Activated B cell treated with CpG ODN at 0.5 μM for 24 hours (primary cell): ENCODE measurements at regions of chr7 and their contacts with region 1.

Region 1: GRCh38 chr7:150988230-150989226 is 2.3 kb upstream of the NOS3 start:
- DNase-seq: no peak
- ATAC-seq: peak; percentile 49
- H3K4me3 Mint-ChIP-seq: no peak overlapping the region
- H3K27ac Mint-ChIP-seq: no peak overlapping the region
- H3K4me1 Mint-ChIP-seq: peaks cover 15% of the 10 kb centered on the region
- H3K27me3 Mint-ChIP-seq: peaks cover 48% of the 10 kb centered on the region
- CTCF ChIP-seq: no peak

Region 2: GRCh38 chr7:150778738-150779301 is 209.7 kb before region 1 on chr7:
- CTCF ChIA-PET with region 1: interaction called, 4 read pairs
- POLR2A ChIA-PET with region 1: no interaction called
- intact Hi-C with region 1: loop called (anchors 1 kb)
- DNase-seq: peak; percentile 37
- ATAC-seq: peak; percentile 49
- H3K4me3 Mint-ChIP-seq: no peak overlapping the region
- H3K27ac Mint-ChIP-seq: no peak overlapping the region
- H3K4me1 Mint-ChIP-seq: no peaks in the 10 kb centered on the region
- H3K27me3 Mint-ChIP-seq: peaks cover 18% of the 10 kb centered on the region
- CTCF ChIP-seq: peak; percentile 99

Region 3: DNA sequence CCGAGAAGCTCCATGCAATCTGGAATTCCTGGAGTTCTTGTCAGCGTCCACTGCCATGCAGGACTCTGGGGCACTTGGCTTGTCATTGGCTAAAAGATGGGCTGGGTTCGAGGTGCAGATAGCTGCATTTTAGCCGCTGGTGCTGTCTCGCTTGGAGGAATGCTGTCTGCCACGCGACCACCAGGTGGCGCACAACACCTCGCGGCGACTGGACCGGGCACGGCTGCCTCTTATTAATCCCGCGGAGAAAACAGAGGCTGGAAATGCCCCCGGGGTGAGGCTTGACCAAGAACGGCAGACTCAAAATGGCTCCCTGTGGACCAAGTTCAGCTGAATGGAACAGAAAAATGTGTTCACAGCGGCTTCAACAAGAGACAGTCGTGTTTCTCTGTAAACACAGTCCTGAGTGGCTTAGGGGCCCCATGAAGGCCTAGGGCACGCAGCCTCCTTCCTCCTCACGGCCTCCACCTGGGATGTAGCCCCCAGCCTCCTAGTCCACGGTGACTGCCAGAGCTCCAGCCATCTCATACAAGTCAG is 90.0 kb before region 1 on chr7:
- CTCF ChIA-PET with region 1: interaction called, 4 read pairs
- POLR2A ChIA-PET with region 1: no interaction called
- intact Hi-C with region 1: loop called (anchors 1 kb)
- DNase-seq: peak; percentile 69
- ATAC-seq: peak; percentile 78
- H3K4me3 Mint-ChIP-seq: peak overlapping the region; percentile 24
- H3K27ac Mint-ChIP-seq: no peak overlapping the region
- H3K4me1 Mint-ChIP-seq: peaks cover 33% of the 10 kb centered on the region
- H3K27me3 Mint-ChIP-seq: peaks cover 38% of the 10 kb centered on the region
- CTCF ChIP-seq: peak; percentile 92

Region 4: DNA sequence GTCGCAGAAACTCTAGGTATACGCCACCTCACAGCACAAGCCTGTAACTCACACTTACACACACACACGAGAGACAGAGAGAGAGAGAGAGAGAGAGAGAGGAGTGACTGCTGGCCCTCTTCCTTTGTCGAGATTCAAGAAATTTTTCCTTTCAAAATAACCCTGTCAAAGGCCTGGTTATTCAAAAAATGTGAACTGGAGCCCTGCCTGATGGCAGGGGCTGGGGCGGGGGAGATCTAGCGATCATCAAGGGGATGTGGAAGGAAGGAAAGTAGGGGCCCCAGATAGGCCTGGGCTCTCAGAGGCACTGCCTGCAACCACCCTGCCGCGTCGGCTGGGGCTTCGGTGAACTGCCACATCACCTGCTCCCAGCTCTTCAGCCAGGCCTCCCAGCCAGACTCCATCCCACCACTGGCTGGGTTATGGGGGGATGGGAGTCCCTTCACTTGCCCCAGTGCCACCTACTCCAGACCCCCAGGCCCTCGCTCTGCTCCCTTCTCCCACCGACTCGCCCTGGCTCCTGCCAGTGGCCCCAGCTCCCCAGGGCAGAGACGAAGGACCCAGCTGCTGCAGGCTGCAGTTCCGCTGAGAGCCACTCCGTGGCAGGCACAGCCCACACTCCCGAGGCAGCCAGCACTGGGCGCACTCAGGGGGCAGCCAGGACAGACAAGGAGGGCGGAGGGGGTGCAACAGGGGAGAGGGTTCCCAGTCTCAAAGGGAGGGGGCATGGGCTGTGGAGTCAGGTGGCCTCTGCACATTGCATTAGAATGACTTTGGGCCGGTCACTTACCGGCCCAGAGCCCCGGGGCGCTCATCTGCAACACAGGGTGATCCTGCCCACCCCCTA is 25.8 kb before region 1 on chr7:
- CTCF ChIA-PET with region 1: interaction called, 22 read pairs
- POLR2A ChIA-PET with region 1: no interaction called
- intact Hi-C with region 1: loop called (anchors 1 kb)
- DNase-seq: peak; percentile 36
- ATAC-seq: peak; percentile 94
- H3K4me3 Mint-ChIP-seq: no peak overlapping the region
- H3K27ac Mint-ChIP-seq: no peak overlapping the region
- H3K4me1 Mint-ChIP-seq: no peaks in the 10 kb centered on the region
- H3K27me3 Mint-ChIP-seq: peaks cover 45% of the 10 kb centered on the region
- CTCF ChIP-seq: no peak

Region 5: DNA sequence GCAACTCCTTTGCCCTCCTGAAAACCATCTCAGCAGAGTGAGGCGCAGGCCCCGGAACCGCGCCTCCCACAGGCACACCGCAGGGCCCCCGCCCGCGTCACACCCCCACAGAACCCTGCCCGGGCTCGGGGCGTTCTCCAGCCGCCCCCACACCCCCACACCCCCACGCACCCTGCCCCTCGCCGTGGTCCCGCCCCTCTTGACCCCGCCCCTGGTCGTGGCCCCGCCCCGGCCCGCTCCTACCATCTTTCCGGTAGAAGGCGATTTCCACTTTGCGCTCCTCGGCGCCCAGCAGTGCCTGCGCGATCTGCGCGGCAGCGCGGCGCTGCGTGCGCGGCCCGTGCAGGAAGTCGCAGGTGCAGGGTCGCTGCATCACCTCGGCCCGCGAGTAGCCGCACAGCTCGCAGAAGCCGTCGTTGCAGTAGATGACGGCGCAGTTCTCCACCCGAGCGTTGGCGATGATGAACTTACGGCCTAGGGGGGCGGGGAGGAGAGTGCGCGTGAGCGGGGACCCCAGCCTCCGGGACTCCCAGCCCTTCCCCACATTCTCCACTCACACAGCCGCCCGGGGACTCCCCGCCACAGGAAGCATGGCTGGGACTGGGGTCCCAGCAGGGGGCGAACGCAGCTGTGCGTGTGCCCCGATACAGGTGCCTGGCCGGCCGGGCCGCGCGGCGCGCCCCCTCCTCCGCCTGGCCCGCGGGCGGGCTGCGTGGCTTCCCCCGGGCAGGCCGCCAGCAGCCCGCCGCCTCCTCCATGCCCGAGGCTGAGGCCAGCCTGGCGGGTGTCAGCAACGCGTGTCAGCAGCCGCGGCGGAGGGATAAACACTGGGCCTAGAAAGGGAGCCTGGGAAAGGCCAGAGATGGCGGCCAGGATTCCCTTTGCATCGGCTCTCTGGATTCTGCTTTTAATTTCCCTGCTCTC is 13.8 kb before region 1 on chr7:
- CTCF ChIA-PET with region 1: interaction called, 6 read pairs
- POLR2A ChIA-PET with region 1: no interaction called
- intact Hi-C with region 1: loop called (anchors 1 kb)
- DNase-seq: peak; percentile 54
- ATAC-seq: peak; percentile 84
- H3K4me3 Mint-ChIP-seq: peak overlapping the region; percentile 85
- H3K27ac Mint-ChIP-seq: no peak overlapping the region
- H3K4me1 Mint-ChIP-seq: peaks cover 41% of the 10 kb centered on the region
- H3K27me3 Mint-ChIP-seq: peaks cover 29% of the 10 kb centered on the region
- CTCF ChIP-seq: no peak